Dorsolateral prefrontal cortex (tissue), 120 donors: ENCODE measurements at regions of chr11 and their contacts with region 1.

Region 1: GRCh38 chr11:84476581-84476980 is 1150.6 kb downstream of the DLG2 start:
- DNase-seq: no peak
- H3K4me3 ChIP-seq: no peak overlapping the region
- H3K27ac ChIP-seq: no peak overlapping the region
- H3K27me3 ChIP-seq: no peaks in the 10 kb centered on the region
- CTCF ChIP-seq: no peak

Region 2: GRCh38 chr11:84173078-84173477 is 303.5 kb before region 1 on chr11:
- intact Hi-C with region 1: no loop called
- DNase-seq: no peak
- H3K4me3 ChIP-seq: peak overlapping the region in 1 of 59 donors; percentile 6
- H3K27ac ChIP-seq: peak overlapping the region in 45 of 59 donors; percentile 1 to 84 (median 49)
- H3K27me3 ChIP-seq: no peaks in the 10 kb centered on the region
- CTCF ChIP-seq: no peak

Region 3: GRCh38 chr11:84536456-84536855 is 59.9 kb after region 1 on chr11:
- intact Hi-C with region 1: loop called in 1 of 2 experiments (anchors 10 kb)
- DNase-seq: no peak
- H3K4me3 ChIP-seq: no peak overlapping the region
- H3K27ac ChIP-seq: no peak overlapping the region
- H3K27me3 ChIP-seq: no peaks in the 10 kb centered on the region
- CTCF ChIP-seq: no peak